Activated CD4-positive, alpha-beta memory T cell treated with anti-CD3 and anti-CD28 coated beads, Interleukin-2, amount 10 ng/mL, durations not matched to agents 7 days and 5 days (primary cell): ENCODE measurements at regions of chr5 and their contacts with region 1.

Region 1: GRCh38 chr5:149667084-149667828 is 62.9 kb upstream of the PPARGC1B start:
- DNase-seq: no peak
- H3K4me3 Mint-ChIP-seq: no peak overlapping the region
- H3K27ac Mint-ChIP-seq: no peak overlapping the region
- H3K4me1 Mint-ChIP-seq: peaks cover 2% of the 10 kb centered on the region
- H3K27me3 Mint-ChIP-seq: peaks cover 2% of the 10 kb centered on the region

Region 2: GRCh38 chr5:149466457-149466972 is 200.7 kb before region 1 on chr5:
- CTCF ChIA-PET with region 1: no interaction called
- POLR2A ChIA-PET with region 1: no interaction called
- DNase-seq: no peak
- H3K4me3 Mint-ChIP-seq: no peak overlapping the region
- H3K27ac Mint-ChIP-seq: no peak overlapping the region
- H3K4me1 Mint-ChIP-seq: no peaks in the 10 kb centered on the region
- H3K27me3 Mint-ChIP-seq: peaks cover 5% of the 10 kb centered on the region

Region 3: GRCh38 chr5:149623473-149623872 is 43.8 kb before region 1 on chr5:
- CTCF ChIA-PET with region 1: no interaction called
- POLR2A ChIA-PET with region 1: no interaction called
- DNase-seq: no peak
- H3K4me3 Mint-ChIP-seq: no peak overlapping the region
- H3K27ac Mint-ChIP-seq: no peak overlapping the region
- H3K4me1 Mint-ChIP-seq: peaks cover 6% of the 10 kb centered on the region
- H3K27me3 Mint-ChIP-seq: no peaks in the 10 kb centered on the region

Region 4: DNA sequence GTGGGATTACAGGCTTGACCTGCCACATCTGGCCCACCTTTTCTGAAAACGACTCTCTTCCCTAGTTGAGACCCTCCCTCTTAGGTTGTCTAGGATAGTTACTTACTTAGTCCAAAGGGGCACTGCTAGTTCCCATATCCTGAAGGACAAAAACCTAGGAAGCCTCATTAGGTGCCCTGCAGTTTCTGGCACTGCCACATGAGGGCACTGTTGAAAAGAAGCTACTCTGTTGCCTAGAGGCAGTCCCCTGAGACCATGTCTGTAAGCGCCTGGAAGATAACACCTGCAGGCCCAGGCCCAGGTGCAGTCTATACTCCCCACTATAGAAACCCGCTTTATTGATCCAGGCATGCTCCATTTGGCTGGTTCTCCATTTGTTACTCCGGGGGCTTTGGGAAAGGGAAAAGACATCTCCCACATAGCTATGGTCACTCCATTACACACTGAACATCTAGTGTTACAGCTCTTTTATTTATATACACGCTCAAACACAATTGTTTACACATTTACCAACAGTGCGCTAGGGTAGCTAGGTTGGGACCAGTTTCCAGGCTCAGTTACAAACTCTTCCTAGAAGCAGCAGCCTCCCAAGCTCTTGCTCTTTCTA is 10.6 kb before region 1 on chr5:
- CTCF ChIA-PET with region 1: interaction called, 27 read pairs
- POLR2A ChIA-PET with region 1: interaction called, 3 read pairs
- DNase-seq: peak; percentile 33
- H3K4me3 Mint-ChIP-seq: no peak overlapping the region
- H3K27ac Mint-ChIP-seq: no peak overlapping the region
- H3K4me1 Mint-ChIP-seq: no peaks in the 10 kb centered on the region
- H3K27me3 Mint-ChIP-seq: peaks cover 3% of the 10 kb centered on the region

Region 5: GRCh38 chr5:149680810-149681221 is 13.6 kb after region 1 on chr5:
- CTCF ChIA-PET with region 1: interaction called, 12 read pairs
- POLR2A ChIA-PET with region 1: no interaction called
- DNase-seq: no peak
- H3K4me3 Mint-ChIP-seq: no peak overlapping the region
- H3K27ac Mint-ChIP-seq: no peak overlapping the region
- H3K4me1 Mint-ChIP-seq: no peaks in the 10 kb centered on the region
- H3K27me3 Mint-ChIP-seq: peaks cover 44% of the 10 kb centered on the region

Region 6: GRCh38 chr5:149820536-149821510 is 153.6 kb after region 1 on chr5:
- CTCF ChIA-PET with region 1: interaction called, 57 read pairs
- POLR2A ChIA-PET with region 1: no interaction called
- DNase-seq: no peak
- H3K4me3 Mint-ChIP-seq: no peak overlapping the region
- H3K27ac Mint-ChIP-seq: no peak overlapping the region
- H3K4me1 Mint-ChIP-seq: no peaks in the 10 kb centered on the region
- H3K27me3 Mint-ChIP-seq: no peaks in the 10 kb centered on the region

Region 7: DNA sequence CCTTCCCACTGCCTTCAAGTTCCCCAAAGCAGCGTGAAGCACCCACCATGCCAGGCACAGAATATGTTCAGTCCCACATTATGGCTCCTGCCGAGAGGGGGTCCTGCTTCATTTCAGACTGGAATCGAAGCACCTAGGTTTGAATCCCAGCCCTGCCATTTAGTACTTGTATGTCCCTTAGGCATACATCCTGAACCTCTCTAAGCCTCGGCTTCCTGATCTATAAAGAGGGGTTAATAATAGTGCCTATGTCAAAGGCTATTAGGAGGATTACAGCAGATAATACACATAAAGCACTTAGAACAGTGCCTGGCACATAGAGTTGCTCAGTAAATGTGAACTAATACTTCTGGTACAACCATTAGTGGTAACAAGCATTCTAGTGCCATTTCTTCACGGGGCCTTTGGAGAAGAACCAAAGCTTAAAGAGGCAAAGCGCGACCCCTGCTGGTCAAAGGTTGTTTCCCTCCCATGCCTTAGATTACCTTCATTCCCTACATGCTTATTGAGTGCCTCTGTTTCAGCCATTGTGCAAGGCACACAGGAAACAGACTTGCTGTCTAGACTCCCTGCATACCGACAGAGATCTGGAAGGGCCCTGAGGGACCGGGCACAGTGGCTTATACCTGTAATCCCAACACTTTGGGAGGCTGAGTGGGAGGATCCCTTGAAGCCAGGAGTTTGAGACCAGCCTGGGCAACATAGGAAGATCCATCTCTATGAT is 161.1 kb after region 1 on chr5:
- CTCF ChIA-PET with region 1: interaction called, 57 read pairs
- POLR2A ChIA-PET with region 1: no interaction called
- DNase-seq: peak; percentile 85
- H3K4me3 Mint-ChIP-seq: no peak overlapping the region
- H3K27ac Mint-ChIP-seq: no peak overlapping the region
- H3K4me1 Mint-ChIP-seq: peaks cover 9% of the 10 kb centered on the region
- H3K27me3 Mint-ChIP-seq: no peaks in the 10 kb centered on the region